Activated CD4-positive, alpha-beta T cell treated with anti-CD3 and anti-CD28 coated beads, Interleukin-2, amount 10 ng/mL, durations not matched to agents 24 days and 14 days (primary cell): ENCODE measurements at regions of chr1 and their contacts with region 1.

Region 1: GRCh38 chr1:209576798-209577197 is 6.7 kb upstream of the CAMK1G start:
- DNase-seq: peak; percentile 92
- H3K4me3 Mint-ChIP-seq: no peak overlapping the region
- H3K27ac Mint-ChIP-seq: no peak overlapping the region
- H3K4me1 Mint-ChIP-seq: peaks cover 5% of the 10 kb centered on the region
- H3K27me3 Mint-ChIP-seq: peaks cover 33% of the 10 kb centered on the region

Region 2: DNA sequence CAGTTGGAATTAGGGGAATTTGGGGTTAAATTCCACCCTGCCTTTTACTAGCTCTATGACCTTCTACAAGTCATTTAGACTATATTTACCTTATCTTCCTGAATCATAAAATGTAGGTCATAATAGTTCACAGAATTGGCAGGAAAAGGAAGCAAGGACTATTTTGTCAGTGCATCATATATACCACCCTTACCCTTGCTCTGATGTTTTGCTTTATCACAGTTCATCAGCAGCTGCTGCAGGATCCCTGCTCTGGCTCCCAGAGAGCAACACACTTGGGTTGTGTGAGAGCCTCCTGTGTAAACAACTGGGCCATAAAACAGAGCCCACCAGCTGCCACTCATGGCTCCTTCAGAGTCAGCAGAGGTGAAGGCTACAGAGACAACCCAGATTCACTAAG is 624.9 kb before region 1 on chr1:
- intact Hi-C with region 1: no loop called
- DNase-seq: no peak
- H3K4me3 Mint-ChIP-seq: no peak overlapping the region
- H3K27ac Mint-ChIP-seq: no peak overlapping the region
- H3K4me1 Mint-ChIP-seq: no peaks in the 10 kb centered on the region
- H3K27me3 Mint-ChIP-seq: peaks cover under 1% of the 10 kb centered on the region

Region 3: DNA sequence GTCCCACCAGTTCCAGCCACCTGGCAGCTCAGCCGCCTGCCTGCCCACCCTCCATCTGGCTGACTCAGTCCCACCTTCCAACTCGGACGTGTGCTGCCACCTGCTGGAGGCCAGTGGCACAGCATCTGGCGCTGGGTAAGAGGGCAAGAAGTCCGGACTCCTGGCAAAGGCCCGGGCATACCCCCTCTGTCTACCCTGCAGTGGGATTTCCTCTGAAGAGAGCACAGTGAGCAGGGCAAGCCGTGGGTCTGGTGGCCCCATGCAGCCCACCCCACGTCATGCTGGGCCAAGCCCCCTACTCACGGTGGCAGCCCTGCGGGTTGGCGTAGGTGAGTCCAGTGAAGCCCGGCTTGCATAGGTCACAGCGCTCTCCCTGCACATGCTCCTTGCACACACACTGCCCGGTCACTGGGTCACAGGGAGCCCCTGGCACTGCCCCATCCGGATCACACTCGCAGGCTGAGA is 51.0 kb after region 1 on chr1:
- intact Hi-C with region 1: loop called (anchors 2 kb)
- DNase-seq: peak; percentile 94
- H3K4me3 Mint-ChIP-seq: no peak overlapping the region
- H3K27ac Mint-ChIP-seq: peak overlapping the region; percentile 38
- H3K4me1 Mint-ChIP-seq: peaks cover 8% of the 10 kb centered on the region
- H3K27me3 Mint-ChIP-seq: no peaks in the 10 kb centered on the region

Region 4: DNA sequence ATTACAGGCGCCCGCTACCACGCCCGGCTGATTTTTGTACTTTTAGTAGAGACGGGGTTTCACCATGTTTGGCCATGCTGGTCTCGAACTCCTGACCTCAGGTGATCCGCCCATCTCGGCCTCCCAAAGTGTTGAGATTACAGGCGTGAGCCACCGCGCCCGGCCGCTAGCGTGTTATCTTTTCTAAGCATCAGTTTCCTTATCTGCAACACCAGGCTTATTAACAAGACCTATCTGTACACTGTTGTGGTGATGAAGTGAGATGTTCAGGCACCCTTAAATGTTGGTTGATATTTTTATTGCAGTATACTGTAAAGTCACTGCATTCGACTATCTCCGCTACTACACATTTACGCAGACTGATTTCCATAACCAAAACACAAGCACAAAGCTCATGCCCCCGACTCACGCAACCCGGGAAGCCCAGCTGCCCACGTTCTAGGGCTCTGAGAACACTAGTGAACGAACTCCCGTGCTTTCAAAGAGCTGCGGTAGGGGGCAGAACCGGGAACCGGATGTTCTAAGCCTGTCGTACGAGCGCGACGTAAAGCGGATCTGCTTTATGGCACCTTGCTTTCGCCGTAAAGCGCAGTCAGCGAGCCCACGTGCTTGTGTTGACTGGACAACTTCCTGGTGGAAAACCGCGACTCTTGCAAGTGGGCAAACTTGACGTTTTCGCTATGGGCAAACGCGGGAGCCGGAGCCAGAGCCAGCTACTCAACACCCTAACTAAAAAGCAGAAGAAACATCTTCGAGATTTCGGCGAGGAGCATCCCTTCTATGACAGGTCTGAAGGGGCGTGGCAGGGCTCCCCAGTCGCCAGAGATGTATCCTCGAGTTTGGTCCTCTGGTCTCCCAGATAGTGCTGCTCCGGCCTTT is 250.8 kb after region 1 on chr1 and contains the start of gene UTP25:
- intact Hi-C with region 1: loop called (anchors 5 kb)
- DNase-seq: peak; percentile 98
- H3K4me3 Mint-ChIP-seq: peak within 1 kb of the TSS; percentile 93
- H3K27ac Mint-ChIP-seq: peak within 1 kb of the TSS; percentile 86
- H3K4me1 Mint-ChIP-seq: peaks cover 43% of the 10 kb centered on the region
- H3K27me3 Mint-ChIP-seq: peaks cover 4% of the 10 kb centered on the region
- total RNA-seq, gene UTP25: 17.2 and 17.6 TPM in 2 replicates

Region 5: DNA sequence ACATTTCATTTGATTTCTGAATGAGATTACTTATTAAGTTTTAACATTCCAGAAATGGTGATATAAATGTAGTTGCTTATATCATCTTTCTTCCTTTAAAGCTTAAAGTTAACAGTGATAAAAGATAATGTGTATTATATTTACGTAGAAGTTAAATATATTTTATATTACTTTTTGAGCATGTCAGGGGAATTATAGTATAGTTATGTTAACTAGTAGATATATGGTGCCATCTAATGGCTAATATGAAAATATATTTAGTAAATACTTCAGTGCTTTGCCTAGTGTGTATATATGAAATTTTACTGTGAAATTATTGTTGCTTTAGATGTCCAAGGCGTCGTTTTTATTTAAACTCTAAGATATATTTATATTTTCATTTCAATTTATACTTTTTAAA is 412.7 kb after region 1 on chr1:
- intact Hi-C with region 1: loop called (anchors 10 kb)
- DNase-seq: no peak
- H3K4me3 Mint-ChIP-seq: no peak overlapping the region
- H3K27ac Mint-ChIP-seq: no peak overlapping the region
- H3K4me1 Mint-ChIP-seq: no peaks in the 10 kb centered on the region
- H3K27me3 Mint-ChIP-seq: peaks cover 7% of the 10 kb centered on the region